K562 (cell line): ENCODE measurements at regions of chr6 and their contacts with region 1.

Region 1: DNA sequence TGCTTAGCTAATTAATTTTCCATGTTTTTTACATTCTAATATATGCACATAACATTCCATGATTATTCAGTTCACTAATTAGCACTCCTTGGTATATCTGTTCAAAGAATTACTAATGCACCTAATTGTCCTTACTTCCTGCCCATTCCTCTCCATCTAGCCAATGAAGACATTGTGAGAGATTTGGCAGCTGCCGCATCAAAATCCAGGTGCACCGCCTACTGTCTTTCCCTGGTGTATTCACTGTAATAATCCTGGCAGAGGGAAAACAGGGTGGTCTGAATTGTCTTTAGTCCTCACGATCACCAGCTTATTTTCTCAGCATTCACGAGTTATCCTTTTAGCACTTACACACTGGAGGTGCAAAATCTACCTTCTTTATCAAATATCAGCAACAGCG is 61.0 kb upstream of the SCGN start:
- DNase-seq: no peak
- ATAC-seq: no peak
- H3K4me3 ChIP-seq: no peak overlapping the region
- H3K27ac ChIP-seq: no peak overlapping the region
- H3K4me1 ChIP-seq: no peaks in the 10 kb centered on the region
- H3K27me3 ChIP-seq: peaks cover 0 to 7% of the 10 kb centered on the region in 2 experiments; a peak in 3 of 5 replicates
- CTCF ChIP-seq: no peak
- EP300 ChIP-seq: no peak
- POLR2A ChIP-seq: no peak
- RAD21 ChIP-seq: no peak

Region 2: GRCh38 chr6:25223490-25223991 is 367.4 kb before region 1 on chr6:
- CTCF ChIA-PET with region 1: no interaction called
- POLR2A ChIA-PET with region 1: no interaction called
- in situ Hi-C with region 1: loop called (anchors 10 kb)
- intact Hi-C with region 1: no loop called
- DNase-seq: peak; percentile 57 to 73 (median 59)
- ATAC-seq: peak; percentile 87
- H3K4me3 ChIP-seq: no peak overlapping the region
- H3K27ac ChIP-seq: no peak overlapping the region
- H3K4me1 ChIP-seq: peaks cover 0 to under 1% of the 10 kb centered on the region in 2 experiments; a peak in 1 of 5 replicates
- H3K27me3 ChIP-seq: peaks cover 0 to 5% of the 10 kb centered on the region in 2 experiments; a peak in 2 of 5 replicates
- CTCF ChIP-seq: peak; percentile 82 to 92 (median 84)
- EP300 ChIP-seq: no peak
- POLR2A ChIP-seq: no peak
- RAD21 ChIP-seq: peak; percentile 80 to 87

Region 3: GRCh38 chr6:25971187-25971811 is 380.3 kb after region 1 on chr6:
- CTCF ChIA-PET with region 1: no interaction called
- POLR2A ChIA-PET with region 1: no interaction called
- in situ Hi-C with region 1: no loop called
- intact Hi-C with region 1: no loop called
- DNase-seq: peak; percentile 63 to 87 (median 68)
- ATAC-seq: peak; percentile 92
- H3K4me3 ChIP-seq: no peak overlapping the region
- H3K27ac ChIP-seq: peak overlapping the region; percentile 16; the same call in 2 of the 3 replicates
- H3K4me1 ChIP-seq: peaks cover 8 to 19% of the 10 kb centered on the region in 2 experiments
- H3K27me3 ChIP-seq: no peaks in the 10 kb centered on the region
- CTCF ChIP-seq: no peak
- EP300 ChIP-seq: peak; percentile 87
- POLR2A ChIP-seq: no peak
- RAD21 ChIP-seq: no peak